ENCODE measurements at regions of chr16 and their contacts with region 1.

Region 1: GRCh38 chr16:19167710-19168370 is at the start of gene SYT17:
- DNase-seq: peak; percentile 72 to 84
- H3K4me3 ChIP-seq: peak within 1 kb of the TSS; percentile 84
- H3K4me3 Mint-ChIP-seq: peak within 1 kb of the TSS; percentile 67
- H3K27ac Mint-ChIP-seq: no peak within 1 kb of the TSS
- H3K4me1 ChIP-seq: peaks cover 31% of the 10 kb centered on the region
- H3K4me1 Mint-ChIP-seq: no peaks in the 10 kb centered on the region
- H3K27me3 ChIP-seq: no peaks in the 10 kb centered on the region
- H3K27me3 Mint-ChIP-seq: no peaks in the 10 kb centered on the region
- CTCF ChIP-seq: peak; percentile 59
- total RNA-seq, gene SYT17: 4.2 and 4.6 TPM in 2 replicates

Region 2: DNA sequence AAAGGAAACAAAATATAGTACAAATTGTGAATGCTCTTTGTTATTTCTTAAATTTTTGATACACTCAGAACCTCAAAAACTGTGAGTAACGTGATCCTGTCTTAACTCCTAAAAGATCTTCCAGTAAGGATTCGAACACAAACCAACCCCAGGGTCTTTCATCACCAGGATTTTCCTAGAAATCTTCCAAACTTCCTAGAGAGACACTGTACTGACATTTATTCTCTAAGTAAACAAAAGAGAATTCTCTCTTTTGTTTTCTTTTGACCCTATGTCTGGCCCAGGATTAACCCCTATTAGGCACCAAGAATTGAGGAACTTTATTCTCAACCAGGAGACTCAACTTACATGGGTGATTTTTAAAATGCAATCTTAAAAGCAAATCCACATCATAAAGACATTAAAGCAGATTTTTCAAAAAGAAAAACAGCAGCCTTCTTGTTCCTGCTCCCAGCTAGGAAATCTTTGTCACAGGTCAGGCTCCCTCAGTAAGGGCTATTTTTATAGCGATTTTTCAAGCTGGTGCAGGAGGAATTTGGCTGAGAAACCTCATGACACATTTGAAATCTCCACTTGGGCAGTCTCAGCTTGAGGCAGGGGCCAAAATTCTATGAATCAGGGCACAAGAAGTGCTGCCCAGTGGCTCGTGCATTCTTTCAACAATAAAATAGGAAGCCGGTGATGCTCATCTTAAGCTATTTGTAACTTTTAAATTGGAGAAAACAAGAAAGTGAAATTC is 235.4 kb before region 1 on chr16:
- CTCF ChIA-PET with region 1: no interaction called
- POLR2A ChIA-PET with region 1: interaction called, 10 read pairs
- intact Hi-C with region 1: no loop called
- DNase-seq: no peak
- H3K4me3 ChIP-seq: no peak overlapping the region
- H3K4me3 Mint-ChIP-seq: no peak overlapping the region
- H3K27ac Mint-ChIP-seq: no peak overlapping the region
- H3K4me1 ChIP-seq: peaks cover 7% of the 10 kb centered on the region
- H3K4me1 Mint-ChIP-seq: peaks cover 10% of the 10 kb centered on the region
- H3K27me3 ChIP-seq: no peaks in the 10 kb centered on the region
- H3K27me3 Mint-ChIP-seq: no peaks in the 10 kb centered on the region
- CTCF ChIP-seq: no peak

Region 3: DNA sequence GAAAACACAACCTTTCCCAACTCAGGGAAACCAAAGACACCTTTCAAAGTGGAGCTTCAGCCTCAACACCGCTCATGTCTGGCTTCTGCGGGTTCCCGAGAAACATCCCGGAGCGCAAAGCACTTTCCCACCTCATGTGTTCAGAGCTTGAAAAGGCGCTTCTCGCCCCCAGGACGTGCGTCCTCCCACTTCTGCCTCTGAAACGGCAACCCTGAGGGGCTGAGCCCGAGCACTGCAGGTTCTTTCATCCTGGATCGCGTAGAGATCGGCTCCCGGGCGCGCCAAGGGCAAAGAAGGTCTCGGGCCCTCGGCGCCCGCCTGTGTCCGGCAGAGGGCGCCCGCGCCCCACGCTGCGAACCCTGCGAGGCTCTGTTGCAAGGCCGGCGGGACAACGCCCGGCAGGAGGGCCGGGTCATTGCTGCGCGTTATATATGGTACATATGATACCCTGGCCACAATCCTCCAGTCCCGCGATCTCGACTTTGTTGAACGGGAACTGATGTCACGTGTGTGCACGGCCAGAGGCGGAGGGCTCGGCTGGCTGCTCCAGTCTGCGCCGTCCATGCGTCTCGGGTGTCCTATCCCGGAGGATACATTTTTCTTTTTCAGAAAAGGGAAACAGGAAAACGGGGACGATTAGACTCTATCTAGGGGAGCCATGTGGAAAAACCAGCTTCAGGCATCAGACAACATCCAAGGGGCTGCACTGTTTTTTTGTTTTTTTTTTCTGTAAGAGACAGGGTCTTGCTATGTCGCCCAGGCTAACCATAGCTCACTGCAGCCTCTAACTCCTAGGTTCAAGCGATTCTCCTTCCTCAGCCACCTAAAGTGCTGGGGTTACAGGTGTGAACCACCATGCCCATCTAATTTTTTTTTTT is 81.3 kb before region 1 on chr16:
- CTCF ChIA-PET with region 1: interaction called, 3 read pairs
- POLR2A ChIA-PET with region 1: no interaction called
- intact Hi-C with region 1: loop called (anchors 1 kb)
- DNase-seq: peak; percentile 93 to 96
- H3K4me3 ChIP-seq: peak overlapping the region; percentile 41
- H3K4me3 Mint-ChIP-seq: peak overlapping the region; percentile 85
- H3K27ac Mint-ChIP-seq: peak overlapping the region; percentile 86
- H3K4me1 ChIP-seq: 0 out of 2 replicates have a peak, but pooled peaks cover 10% of the 10 kb centered on the region
- H3K4me1 Mint-ChIP-seq: no peaks in the 10 kb centered on the region
- H3K27me3 ChIP-seq: no peaks in the 10 kb centered on the region
- H3K27me3 Mint-ChIP-seq: no peaks in the 10 kb centered on the region
- CTCF ChIP-seq: peak; percentile 92 to 95

Region 4: GRCh38 chr16:19123535-19124178 is 44.2 kb before region 1 on chr16:
- CTCF ChIA-PET with region 1: no interaction called
- POLR2A ChIA-PET with region 1: no interaction called
- intact Hi-C with region 1: loop called (anchors 5 kb)
- DNase-seq: no peak
- H3K4me3 ChIP-seq: no peak overlapping the region
- H3K4me3 Mint-ChIP-seq: no peak overlapping the region
- H3K27ac Mint-ChIP-seq: no peak overlapping the region
- H3K4me1 ChIP-seq: peaks cover 33% of the 10 kb centered on the region
- H3K4me1 Mint-ChIP-seq: peaks cover 21% of the 10 kb centered on the region
- H3K27me3 ChIP-seq: no peaks in the 10 kb centered on the region
- H3K27me3 Mint-ChIP-seq: no peaks in the 10 kb centered on the region
- CTCF ChIP-seq: no peak

Region 5: DNA sequence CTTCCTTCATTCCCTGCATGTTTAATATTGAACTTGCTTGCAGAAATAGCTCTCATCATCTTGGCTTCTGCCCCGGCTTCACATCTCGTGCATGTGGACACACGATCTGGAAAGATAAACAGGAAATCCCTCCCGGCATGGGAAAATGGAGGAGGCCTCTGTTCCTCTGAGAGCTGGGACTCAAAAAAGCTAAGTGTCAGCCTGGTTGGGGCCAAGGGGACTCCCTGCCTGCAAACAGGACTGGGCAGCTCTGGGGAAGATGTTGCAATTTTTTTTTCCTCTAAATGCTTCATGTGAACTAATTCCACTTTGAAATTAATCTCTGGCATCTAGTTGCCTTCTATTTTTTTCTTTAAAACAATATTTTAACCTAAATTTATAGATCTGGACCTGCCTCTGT is 29.2 kb before region 1 on chr16:
- CTCF ChIA-PET with region 1: no interaction called
- POLR2A ChIA-PET with region 1: no interaction called
- intact Hi-C with region 1: loop called (anchors 2 kb)
- DNase-seq: peak in 1 of 2 experiments; percentile 6
- H3K4me3 ChIP-seq: no peak overlapping the region
- H3K4me3 Mint-ChIP-seq: no peak overlapping the region
- H3K27ac Mint-ChIP-seq: no peak overlapping the region
- H3K4me1 ChIP-seq: peaks cover 16% of the 10 kb centered on the region
- H3K4me1 Mint-ChIP-seq: peaks cover 11% of the 10 kb centered on the region
- H3K27me3 ChIP-seq: no peaks in the 10 kb centered on the region
- H3K27me3 Mint-ChIP-seq: no peaks in the 10 kb centered on the region
- CTCF ChIP-seq: no peak

Region 6: DNA sequence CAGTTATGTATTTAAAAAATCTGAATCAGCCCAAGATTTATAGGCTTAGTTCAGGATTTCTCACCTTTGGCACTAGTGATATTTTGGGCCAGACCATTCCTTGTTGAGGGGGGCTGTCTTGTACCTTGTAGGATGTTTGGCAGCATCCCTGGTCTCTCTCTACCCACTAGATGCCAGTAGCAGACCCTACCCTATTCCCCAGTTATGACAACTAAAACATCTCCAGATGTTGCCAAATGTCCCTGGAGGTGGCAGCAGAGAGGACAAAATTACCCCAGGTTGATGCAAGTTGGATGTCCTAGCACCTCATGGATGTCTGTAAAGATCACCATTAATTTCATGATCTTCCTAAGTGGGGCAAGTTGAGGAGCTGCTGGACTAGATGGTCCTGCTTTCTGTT is 46.0 kb after region 1 on chr16:
- CTCF ChIA-PET with region 1: no interaction called
- POLR2A ChIA-PET with region 1: no interaction called
- intact Hi-C with region 1: no loop called
- DNase-seq: peak in 1 of 2 experiments; percentile 6
- H3K4me3 ChIP-seq: no peak overlapping the region
- H3K4me3 Mint-ChIP-seq: no peak overlapping the region
- H3K27ac Mint-ChIP-seq: no peak overlapping the region
- H3K4me1 ChIP-seq: no peaks in the 10 kb centered on the region
- H3K4me1 Mint-ChIP-seq: no peaks in the 10 kb centered on the region
- H3K27me3 ChIP-seq: no peaks in the 10 kb centered on the region
- H3K27me3 Mint-ChIP-seq: no peaks in the 10 kb centered on the region
- CTCF ChIP-seq: peak in 1 of 2 experiments; percentile 7

Region 7: GRCh38 chr16:19375561-19376158 is 207.8 kb after region 1 on chr16:
- CTCF ChIA-PET with region 1: no interaction called
- POLR2A ChIA-PET with region 1: no interaction called
- intact Hi-C with region 1: loop called (anchors 1 kb)
- DNase-seq: peak; percentile 40 to 46
- H3K4me3 ChIP-seq: no peak overlapping the region
- H3K4me3 Mint-ChIP-seq: no peak overlapping the region
- H3K27ac Mint-ChIP-seq: no peak overlapping the region
- H3K4me1 ChIP-seq: peaks cover 4% of the 10 kb centered on the region; the same call in 1 of the 2 replicates
- H3K4me1 Mint-ChIP-seq: peaks cover 8% of the 10 kb centered on the region
- H3K27me3 ChIP-seq: no peaks in the 10 kb centered on the region
- H3K27me3 Mint-ChIP-seq: no peaks in the 10 kb centered on the region
- CTCF ChIP-seq: peak; percentile 78 to 83

Region 8: GRCh38 chr16:19502395-19503131 is 334.7 kb after region 1 on chr16:
- CTCF ChIA-PET with region 1: no interaction called
- POLR2A ChIA-PET with region 1: no interaction called
- intact Hi-C with region 1: loop called (anchors 1 kb)
- DNase-seq: peak; percentile 70 to 74
- H3K4me3 ChIP-seq: no peak overlapping the region
- H3K4me3 Mint-ChIP-seq: no peak overlapping the region
- H3K27ac Mint-ChIP-seq: no peak overlapping the region
- H3K4me1 ChIP-seq: 0 out of 2 replicates have a peak, but pooled peaks cover 4% of the 10 kb centered on the region
- H3K4me1 Mint-ChIP-seq: peaks cover 9% of the 10 kb centered on the region
- H3K27me3 ChIP-seq: no peaks in the 10 kb centered on the region
- H3K27me3 Mint-ChIP-seq: no peaks in the 10 kb centered on the region
- CTCF ChIP-seq: peak; percentile 69 to 72